A549 (cell line): ENCODE measurements at regions of chr4 and their contacts with region 1.

Region 1: DNA sequence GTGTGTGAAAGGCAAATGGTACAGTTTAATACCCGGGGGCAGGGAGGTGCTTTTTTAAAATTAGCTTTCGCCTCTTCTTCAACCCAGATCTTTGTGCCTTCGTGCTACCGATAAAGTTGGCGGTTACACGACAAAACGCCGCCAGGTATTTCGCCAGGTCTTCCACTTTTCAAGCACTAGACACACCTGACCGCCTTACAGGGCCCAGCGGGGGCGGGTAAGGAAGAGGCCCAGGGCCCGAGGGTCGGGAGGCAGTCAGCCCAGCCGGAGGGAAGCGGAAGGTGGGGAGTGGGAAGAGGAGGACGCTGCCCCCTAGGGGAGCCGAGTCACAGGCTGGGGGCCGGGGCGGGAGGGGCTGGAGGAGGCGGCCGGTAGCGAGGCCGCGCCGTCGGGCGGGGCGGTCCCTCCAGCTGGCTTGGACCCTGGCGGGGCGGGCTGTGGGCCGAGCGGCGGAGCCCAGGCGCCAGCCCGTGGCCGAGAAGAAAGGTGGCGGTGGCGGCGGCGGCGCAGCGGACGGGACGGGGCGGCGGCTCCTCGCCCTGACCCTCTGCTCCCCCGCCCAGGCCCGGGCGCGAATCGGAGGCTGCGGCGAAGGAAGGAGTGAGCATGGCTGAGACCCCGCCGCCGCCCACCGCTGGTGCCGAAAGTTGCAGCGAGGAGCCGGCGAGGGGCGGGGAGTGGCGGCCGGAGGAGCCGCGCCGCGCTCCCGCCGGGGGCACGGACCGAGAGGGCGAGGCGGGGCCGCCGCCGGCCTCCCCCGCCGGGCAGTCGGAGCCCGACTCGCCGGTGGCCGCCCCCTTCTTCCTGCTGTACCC is 16.2 kb downstream of the UTP3 start:
- DNase-seq: peak; percentile 49 to 73
- ATAC-seq: peak; percentile 83
- H3K4me3 ChIP-seq: peak overlapping the region; percentile 98
- H3K27ac ChIP-seq: peak overlapping the region; percentile 95 to 98
- H3K4me1 ChIP-seq: peaks cover 30% of the 10 kb centered on the region
- CTCF ChIP-seq: peak; percentile 33; the same call in 2 of the 3 replicates
- EP300 ChIP-seq: no peak
- POLR2A ChIP-seq: peak; percentile 52
- RAD21 ChIP-seq: peak in 1 of 2 experiments; percentile 37; a peak in 2 of 5 replicates

Region 2: DNA sequence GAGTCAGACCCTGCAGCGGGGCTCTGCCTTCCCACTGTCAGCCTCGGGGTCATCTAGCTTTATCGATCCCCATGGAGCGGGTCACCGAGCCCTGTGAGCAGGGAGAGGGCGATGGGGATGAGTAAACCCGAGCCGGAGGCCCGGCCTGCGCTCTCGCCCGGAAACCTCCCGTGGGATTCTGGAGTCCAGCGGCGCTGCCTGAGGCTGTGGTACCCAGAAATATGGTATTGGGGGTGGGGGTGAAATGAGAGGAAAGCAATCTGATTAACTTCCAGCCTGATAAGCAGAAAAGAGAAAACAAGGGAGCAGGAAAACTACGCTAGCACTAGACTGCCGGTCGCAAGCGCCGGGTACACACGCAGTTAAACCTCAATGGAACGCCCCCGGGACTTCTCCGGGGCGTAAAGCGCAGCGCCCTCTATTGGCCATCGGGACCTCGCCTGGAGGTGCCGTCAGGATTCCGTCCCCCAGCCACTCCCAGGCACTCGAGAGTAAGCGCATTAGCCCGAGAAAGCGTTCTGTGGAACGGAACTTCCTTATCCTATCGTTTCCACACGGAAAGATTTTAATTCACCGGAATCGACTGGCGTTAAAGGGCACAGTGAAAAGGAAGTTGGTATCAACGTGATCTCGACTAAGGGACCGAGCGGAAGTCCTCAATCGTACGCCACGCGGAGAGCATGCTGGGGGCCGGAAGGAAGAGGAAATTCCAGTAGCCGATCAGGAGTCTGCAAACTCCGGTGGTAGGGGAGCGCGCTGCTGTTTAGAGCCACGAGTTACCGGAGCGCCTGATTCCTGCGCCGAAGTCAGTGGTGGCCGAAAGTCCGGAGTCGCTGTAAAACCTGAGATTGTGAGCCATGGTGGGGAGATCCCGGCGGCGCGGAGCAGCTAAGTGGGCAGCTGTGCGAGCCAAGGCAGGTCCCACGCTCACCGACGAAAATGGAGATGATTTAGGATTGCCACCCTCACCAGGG is 16.4 kb before region 1 on chr4 and contains the start of gene UTP3:
- CTCF ChIA-PET with region 1: interaction called, 15 read pairs
- POLR2A ChIA-PET with region 1: interaction called, 12 read pairs
- DNase-seq: peak; percentile 75 to 97
- ATAC-seq: peak; percentile 97
- H3K4me3 ChIP-seq: peak within 1 kb of the TSS; percentile 70
- H3K27ac ChIP-seq: peak within 1 kb of the TSS; percentile 87 to 96
- H3K4me1 ChIP-seq: peaks cover 21% of the 10 kb centered on the region
- CTCF ChIP-seq: peak; percentile 89
- EP300 ChIP-seq: no peak
- POLR2A ChIP-seq: peak; percentile 63
- RAD21 ChIP-seq: peak; percentile 45 to 77
- polyA plus RNA-seq, gene UTP3: 19.0 and 24.8 TPM in 2 replicates